OCI-LY7 (cell line): ENCODE measurements at regions of chr19 and their contacts with region 1.

Region 1: DNA sequence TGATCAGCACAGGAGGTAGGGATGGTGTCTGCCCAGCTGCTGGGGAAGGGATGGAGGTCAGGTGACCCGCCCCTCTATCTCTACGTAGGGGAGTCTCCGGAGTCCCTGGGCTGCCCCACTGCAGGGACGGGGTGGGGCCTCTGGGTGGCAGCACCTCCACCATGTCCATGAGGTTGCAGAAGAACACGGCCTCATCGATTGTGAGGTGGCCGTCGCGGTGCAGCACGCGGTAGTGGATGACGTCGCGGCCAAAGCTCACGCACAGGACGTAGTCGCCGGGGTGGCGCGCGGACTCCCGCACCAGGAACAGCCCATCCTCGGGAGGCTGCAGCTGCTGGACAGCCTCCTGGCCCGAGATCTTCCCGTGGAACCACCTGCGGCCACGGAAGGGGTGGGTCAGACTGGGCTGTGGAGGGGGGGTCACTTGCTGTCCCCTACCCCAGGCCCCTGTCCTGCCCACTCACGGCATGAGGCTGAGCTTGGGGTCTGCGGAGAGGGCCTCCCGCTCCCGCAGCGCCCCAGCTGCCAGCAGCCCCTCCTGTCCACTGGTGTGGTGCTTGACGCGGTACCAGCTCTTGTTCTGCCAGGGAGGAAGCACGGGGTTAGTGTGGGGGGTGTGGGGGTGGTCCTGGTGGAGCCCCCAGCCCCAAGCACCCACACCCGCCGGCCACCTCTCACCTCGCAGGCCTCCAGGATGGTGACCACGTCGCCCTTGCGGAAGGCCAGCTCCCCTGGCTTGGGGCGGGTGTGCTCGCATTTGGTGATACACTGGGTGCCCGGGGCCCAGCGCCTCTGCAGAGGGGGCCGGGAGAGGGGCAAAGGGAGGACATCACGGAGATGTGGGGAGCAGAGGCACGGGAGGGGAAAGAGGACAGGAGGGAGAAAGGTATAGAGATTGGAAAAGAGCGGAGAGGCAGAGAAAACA is 2.3 kb downstream of the MATK start:
- DNase-seq: no peak
- H3K4me3 ChIP-seq: no peak overlapping the region
- H3K27ac ChIP-seq: no peak overlapping the region
- H3K4me1 ChIP-seq: no peaks in the 10 kb centered on the region
- CTCF ChIP-seq: peak; percentile 59

Region 2: DNA sequence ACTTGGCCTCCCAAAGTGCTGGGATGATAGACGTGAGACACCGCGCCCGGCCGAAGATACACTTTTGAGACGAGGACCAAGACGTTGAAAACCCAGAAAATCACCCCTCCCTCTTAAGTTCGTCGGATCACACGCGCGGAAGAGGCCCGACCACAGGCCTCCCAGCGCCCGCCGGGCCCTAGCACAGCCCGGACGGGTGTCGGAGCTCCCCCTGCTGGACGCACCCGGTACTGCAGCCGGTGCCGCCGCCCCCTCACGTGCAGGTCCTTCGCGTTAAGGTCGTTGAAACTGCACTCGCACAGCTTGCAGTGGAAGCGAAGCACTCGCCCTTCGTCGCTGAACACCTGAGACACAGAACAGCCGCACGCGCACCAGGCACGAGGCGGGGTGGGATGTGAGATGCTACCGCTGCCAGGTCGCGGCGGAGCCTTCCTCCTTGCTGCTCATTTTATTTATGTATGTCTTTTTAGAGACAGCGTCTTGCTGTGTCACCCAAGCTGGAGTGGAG is 38.0 kb after region 1 on chr19:
- CTCF ChIA-PET with region 1: no interaction called
- POLR2A ChIA-PET with region 1: no interaction called
- intact Hi-C with region 1: loop called (anchors 1 kb)
- DNase-seq: peak; percentile 58
- H3K4me3 ChIP-seq: no peak overlapping the region
- H3K27ac ChIP-seq: no peak overlapping the region
- H3K4me1 ChIP-seq: no peaks in the 10 kb centered on the region
- CTCF ChIP-seq: peak; percentile 93

Region 3: DNA sequence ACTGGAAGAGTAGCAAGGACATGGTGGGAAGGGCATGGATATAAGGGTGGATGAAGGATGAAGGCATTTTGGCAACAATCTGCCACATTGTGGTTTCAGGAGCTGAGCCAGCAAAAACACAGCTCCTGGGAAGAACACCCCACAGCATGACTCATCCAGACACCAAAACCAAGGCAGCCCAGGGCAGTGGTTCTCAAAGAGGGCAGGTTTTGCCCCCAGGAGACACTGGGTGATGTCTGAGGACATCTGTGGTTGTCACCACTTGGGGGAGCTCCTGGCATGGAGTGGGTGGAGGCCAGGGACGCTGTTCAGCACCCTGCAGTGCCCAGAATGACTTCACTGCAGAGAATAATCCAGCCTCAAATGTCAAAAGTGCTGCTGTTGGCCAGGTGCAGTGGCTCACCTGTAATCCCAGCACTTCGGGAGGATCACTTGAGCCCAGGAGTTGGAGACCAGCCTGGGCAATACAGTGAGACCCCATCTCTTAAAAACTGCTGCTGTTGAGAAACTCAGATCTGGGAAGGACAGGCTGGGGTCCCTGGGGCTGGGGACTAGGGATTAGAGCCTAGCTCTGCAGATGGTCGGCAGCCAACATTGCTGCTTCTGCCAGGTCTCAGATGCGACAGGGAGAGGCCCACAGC is 68.8 kb after region 1 on chr19:
- CTCF ChIA-PET with region 1: no interaction called
- POLR2A ChIA-PET with region 1: no interaction called
- intact Hi-C with region 1: no loop called
- DNase-seq: peak; percentile 14
- H3K4me3 ChIP-seq: no peak overlapping the region
- H3K27ac ChIP-seq: no peak overlapping the region
- H3K4me1 ChIP-seq: no peaks in the 10 kb centered on the region
- CTCF ChIP-seq: peak; percentile 57